Activated naive CD4-positive, alpha-beta T cell treated with anti-CD3 and anti-CD28 coated beads for 36 hours (primary cell): ENCODE measurements at regions of chr9 and their contacts with region 1.

Region 1: DNA sequence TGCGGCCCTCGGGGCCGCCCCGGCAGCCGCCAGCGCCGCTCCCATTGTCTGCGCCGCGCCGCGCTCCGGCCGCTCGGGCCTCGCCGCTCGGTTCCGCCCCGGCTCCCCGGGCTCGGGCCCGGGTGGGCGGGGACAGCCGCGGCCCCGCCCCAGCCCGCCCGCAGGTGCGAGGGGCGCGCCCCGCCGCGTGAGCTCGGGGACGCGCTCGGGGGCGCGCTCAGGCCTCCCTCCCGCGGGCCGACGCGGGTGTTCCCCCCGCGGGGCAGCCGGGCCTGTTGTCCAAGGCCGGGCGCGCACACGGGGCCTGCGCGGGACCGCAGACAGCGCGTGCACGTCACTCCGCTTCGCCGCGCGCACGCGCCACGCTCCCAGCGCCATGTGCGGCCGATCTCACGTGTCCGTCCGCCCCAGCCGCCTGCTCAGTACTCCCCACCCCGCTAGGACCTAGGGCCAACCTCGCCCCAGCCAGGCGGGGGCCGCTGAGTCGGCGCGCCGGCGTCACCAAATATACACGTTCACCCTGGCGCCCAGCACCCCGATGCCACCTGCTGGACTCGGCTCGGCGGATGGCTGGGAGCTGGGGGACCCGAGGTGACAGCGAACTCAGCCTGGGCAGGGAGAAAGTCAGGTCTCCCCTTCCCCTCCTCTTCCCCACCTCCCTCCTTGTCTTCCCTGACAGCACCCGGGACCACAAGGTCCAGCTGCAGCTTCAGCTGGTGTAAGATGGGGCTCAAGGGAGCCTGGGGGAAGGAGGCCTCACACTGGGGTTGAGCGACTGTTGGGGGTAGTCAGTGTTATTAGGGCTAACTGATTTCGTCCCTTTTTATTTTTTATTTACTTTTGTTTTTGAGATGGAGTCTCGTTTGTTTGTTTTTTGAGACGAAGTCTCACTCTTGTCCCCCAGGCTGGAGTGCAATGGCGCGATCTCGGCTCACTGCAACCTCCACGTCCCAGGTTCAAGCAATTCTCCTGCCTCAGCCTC is 14.3 kb downstream of the GBGT1 start:
- DNase-seq: peak; percentile 76
- H3K4me3 Mint-ChIP-seq: peak overlapping the region; percentile 72
- H3K27ac Mint-ChIP-seq: peak overlapping the region; percentile 69
- H3K4me1 Mint-ChIP-seq: peaks cover 24% of the 10 kb centered on the region
- H3K27me3 Mint-ChIP-seq: no peaks in the 10 kb centered on the region

Region 2: GRCh38 chr9:131635285-131635684 is 1514.1 kb before region 1 on chr9:
- CTCF ChIA-PET with region 1: no interaction called
- intact Hi-C with region 1: no loop called
- DNase-seq: peak; percentile 92
- H3K4me3 Mint-ChIP-seq: no peak overlapping the region
- H3K27ac Mint-ChIP-seq: peak overlapping the region; percentile 89
- H3K4me1 Mint-ChIP-seq: peaks cover 37% of the 10 kb centered on the region
- H3K27me3 Mint-ChIP-seq: no peaks in the 10 kb centered on the region

Region 3: DNA sequence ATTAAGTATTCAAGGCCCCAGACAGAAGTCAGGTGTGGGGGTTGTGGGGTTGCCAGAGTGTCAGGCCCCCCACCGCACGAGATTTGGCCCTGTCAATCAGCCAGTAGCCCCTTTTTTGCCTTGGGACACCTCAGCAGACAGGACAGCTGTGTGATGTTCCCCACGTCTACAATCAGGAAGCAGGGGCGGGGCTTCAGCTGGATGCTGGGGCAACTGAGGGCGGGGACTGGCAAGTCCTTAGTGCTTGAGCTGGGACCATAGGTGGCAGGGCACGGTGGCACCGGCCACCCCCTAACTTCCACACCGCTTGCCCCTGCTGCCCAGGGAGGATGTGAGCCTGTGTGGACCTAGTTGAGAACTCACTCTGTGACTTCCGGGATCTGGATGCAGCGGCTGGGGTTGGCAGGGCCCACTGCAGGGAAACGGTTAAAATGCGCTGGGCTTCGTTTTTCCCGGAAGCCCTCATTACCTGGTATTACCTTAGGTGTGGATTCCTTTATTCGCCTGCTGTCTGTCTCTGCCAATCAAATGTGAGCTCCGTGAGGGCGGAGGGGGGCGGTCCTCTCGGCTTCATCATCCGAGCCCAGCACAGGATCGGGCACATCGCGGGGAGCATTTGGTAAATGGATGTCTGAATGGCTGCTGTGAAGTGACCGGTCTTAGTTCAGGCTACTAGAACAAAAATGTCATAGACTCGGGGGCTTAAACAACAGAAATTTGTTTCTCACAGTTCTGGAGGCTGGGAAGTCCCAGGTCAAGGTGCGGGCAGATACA is 126.1 kb before region 1 on chr9:
- CTCF ChIA-PET with region 1: interaction called, 10 read pairs
- intact Hi-C with region 1: loop called (anchors 1 kb)
- DNase-seq: peak; percentile 70
- H3K4me3 Mint-ChIP-seq: no peak overlapping the region
- H3K27ac Mint-ChIP-seq: no peak overlapping the region
- H3K4me1 Mint-ChIP-seq: peaks cover 15% of the 10 kb centered on the region
- H3K27me3 Mint-ChIP-seq: no peaks in the 10 kb centered on the region

Region 4: DNA sequence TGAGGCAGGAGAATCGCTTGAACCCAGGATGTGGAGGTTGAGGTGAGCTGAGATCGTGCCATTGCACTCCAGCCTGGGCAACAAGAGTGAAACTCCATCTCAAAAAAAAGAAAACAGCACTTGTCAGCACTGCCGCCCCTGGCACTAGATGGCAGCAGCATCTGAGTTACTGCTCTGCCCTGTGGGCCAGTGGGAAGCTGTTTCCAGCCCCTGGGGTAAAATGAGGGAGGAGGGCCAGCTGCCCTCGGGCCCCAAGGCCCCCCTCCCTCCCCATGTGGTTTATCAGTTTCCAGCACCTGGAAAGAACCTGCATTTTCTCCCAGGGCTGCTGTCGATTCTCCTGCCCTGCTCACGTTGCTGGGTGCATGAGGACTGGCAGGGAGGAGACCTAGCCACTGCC is 100.8 kb before region 1 on chr9:
- CTCF ChIA-PET with region 1: interaction called, 3 read pairs
- intact Hi-C with region 1: loop called (anchors 1 kb)
- DNase-seq: peak; percentile 49
- H3K4me3 Mint-ChIP-seq: no peak overlapping the region
- H3K27ac Mint-ChIP-seq: no peak overlapping the region
- H3K4me1 Mint-ChIP-seq: peaks cover 4% of the 10 kb centered on the region
- H3K27me3 Mint-ChIP-seq: no peaks in the 10 kb centered on the region

Region 5: GRCh38 chr9:133103183-133103986 is 46.0 kb before region 1 on chr9:
- CTCF ChIA-PET with region 1: interaction called, 26 read pairs
- intact Hi-C with region 1: loop called (anchors 1 kb)
- DNase-seq: peak; percentile 62
- H3K4me3 Mint-ChIP-seq: no peak overlapping the region
- H3K27ac Mint-ChIP-seq: peak overlapping the region; percentile 41
- H3K4me1 Mint-ChIP-seq: no peaks in the 10 kb centered on the region
- H3K27me3 Mint-ChIP-seq: no peaks in the 10 kb centered on the region

Region 6: GRCh38 chr9:133133681-133134418 is 15.6 kb before region 1 on chr9:
- CTCF ChIA-PET with region 1: interaction called, 31 read pairs
- intact Hi-C with region 1: loop called (anchors 1 kb)
- DNase-seq: peak; percentile 96
- H3K4me3 Mint-ChIP-seq: peak overlapping the region; percentile 38
- H3K27ac Mint-ChIP-seq: peak overlapping the region; percentile 96
- H3K4me1 Mint-ChIP-seq: peaks cover 70% of the 10 kb centered on the region
- H3K27me3 Mint-ChIP-seq: no peaks in the 10 kb centered on the region